PC-9 (cell line): ENCODE measurements at regions of chr5 and their contacts with region 1.

Region 1: GRCh38 chr5:43120720-43121564 is at the start of gene ZNF131:
- DNase-seq: peak; percentile 95 to 100
- H3K4me3 ChIP-seq: peak within 1 kb of the TSS; percentile 73
- H3K27ac ChIP-seq: peak within 1 kb of the TSS; percentile 91
- H3K4me1 ChIP-seq: peaks cover 31% of the 10 kb centered on the region
- H3K27me3 ChIP-seq: no peaks in the 10 kb centered on the region
- CTCF ChIP-seq: no peak
- total RNA-seq, gene ZNF131: 79.5 and 82.4 TPM in 2 replicates

Region 2: DNA sequence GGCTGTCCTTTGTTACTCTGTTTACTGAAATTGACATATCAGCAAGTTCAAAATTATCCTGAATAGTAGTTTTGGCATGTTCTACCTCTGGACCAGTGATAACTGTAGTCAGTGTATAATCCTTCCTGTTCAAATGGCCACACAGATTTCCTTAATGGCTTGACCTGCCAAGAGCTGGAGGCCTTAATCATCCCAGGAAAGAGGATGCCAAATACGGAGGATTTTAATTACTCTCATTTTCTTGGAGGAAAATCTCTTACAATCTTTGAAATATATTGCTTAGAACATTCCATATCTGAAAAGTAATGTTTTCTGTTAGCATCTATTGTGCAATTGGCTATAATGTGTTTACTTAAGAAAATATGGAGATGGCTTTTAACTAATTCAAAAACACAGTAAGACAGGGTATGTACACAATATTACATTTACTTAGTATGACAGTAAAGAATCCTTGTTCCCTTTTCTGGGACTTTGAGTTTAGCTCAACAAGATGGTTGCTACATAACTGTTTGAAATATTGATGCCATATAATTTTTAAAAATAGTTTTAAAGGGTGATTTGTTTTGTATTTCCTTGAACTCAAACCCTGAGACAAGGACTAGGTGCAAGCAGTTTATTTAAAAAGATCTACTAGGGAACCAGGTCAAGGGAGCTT is 240.3 kb before region 1 on chr5:
- CTCF ChIA-PET with region 1: interaction called, 12 read pairs
- POLR2A ChIA-PET with region 1: no interaction called
- intact Hi-C with region 1: no loop called
- DNase-seq: no peak
- H3K4me3 ChIP-seq: no peak overlapping the region
- H3K27ac ChIP-seq: no peak overlapping the region
- H3K4me1 ChIP-seq: no peaks in the 10 kb centered on the region
- H3K27me3 ChIP-seq: no peaks in the 10 kb centered on the region
- CTCF ChIP-seq: no peak

Region 3: GRCh38 chr5:42994246-42995151 is 126.4 kb before region 1 on chr5:
- CTCF ChIA-PET with region 1: no interaction called
- POLR2A ChIA-PET with region 1: no interaction called
- intact Hi-C with region 1: no loop called
- DNase-seq: no peak
- H3K4me3 ChIP-seq: no peak overlapping the region
- H3K27ac ChIP-seq: no peak overlapping the region
- H3K4me1 ChIP-seq: peaks cover 6% of the 10 kb centered on the region
- H3K27me3 ChIP-seq: no peaks in the 10 kb centered on the region
- CTCF ChIP-seq: no peak

Region 4: DNA sequence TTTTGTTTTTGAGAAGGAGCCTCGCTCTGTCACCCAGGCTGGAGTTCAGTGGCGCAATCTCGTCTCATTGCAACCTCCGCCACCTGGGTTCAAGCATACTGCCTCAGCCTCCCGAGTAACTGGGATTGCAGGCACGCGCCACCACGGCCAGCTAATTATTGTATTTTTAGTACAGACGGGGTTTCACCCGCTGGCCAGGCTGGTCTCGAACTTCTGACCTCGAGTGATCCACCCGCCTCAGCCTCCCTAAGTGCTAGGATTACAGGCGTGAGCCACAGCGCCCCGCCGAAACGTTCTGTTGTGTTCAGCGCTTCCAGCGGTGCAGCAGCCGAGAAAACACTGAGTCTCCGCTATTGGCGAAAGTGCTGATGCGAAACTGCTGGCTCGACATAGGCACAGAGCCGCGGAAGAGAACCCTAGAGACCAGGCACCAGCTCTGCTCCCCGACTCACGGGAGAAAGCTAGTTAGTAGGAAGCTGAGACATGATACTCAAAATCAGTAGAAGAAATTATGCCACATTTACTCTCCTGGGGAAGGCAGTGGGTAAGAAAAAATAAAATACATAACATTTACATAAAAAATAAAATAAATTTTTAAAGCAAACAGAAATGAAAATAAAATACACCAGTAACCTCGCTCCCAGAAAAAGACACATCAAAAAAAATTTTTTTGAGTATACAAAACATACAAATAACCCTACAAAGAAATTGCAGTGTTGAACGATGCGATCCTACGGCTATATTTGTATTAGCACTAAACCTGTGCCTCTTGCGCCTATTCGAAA is 112.4 kb before region 1 on chr5:
- CTCF ChIA-PET with region 1: interaction called, 4 read pairs
- POLR2A ChIA-PET with region 1: interaction called, 7 read pairs
- intact Hi-C with region 1: loop called (anchors 5 kb)
- DNase-seq: peak; percentile 94 to 98
- H3K4me3 ChIP-seq: peak overlapping the region; percentile 58
- H3K27ac ChIP-seq: peak overlapping the region; percentile 85
- H3K4me1 ChIP-seq: peaks cover 15% of the 10 kb centered on the region
- H3K27me3 ChIP-seq: no peaks in the 10 kb centered on the region
- CTCF ChIP-seq: peak; percentile 18; the same call in 1 of the 2 replicates

Region 5: GRCh38 chr5:43066799-43067741 is 53.9 kb before region 1 on chr5:
- CTCF ChIA-PET with region 1: interaction called, 3 read pairs
- POLR2A ChIA-PET with region 1: interaction called, 21 read pairs
- intact Hi-C with region 1: loop called (anchors 1 kb)
- DNase-seq: peak; percentile 91 to 93
- H3K4me3 ChIP-seq: peak overlapping the region; percentile 75
- H3K27ac ChIP-seq: peak overlapping the region; percentile 84
- H3K4me1 ChIP-seq: peaks cover 27% of the 10 kb centered on the region
- H3K27me3 ChIP-seq: no peaks in the 10 kb centered on the region
- CTCF ChIP-seq: no peak

Region 6: GRCh38 chr5:43197535-43197934 is 76.6 kb after region 1 on chr5:
- CTCF ChIA-PET with region 1: no interaction called
- POLR2A ChIA-PET with region 1: no interaction called
- intact Hi-C with region 1: no loop called
- DNase-seq: no peak
- H3K4me3 ChIP-seq: no peak overlapping the region
- H3K27ac ChIP-seq: no peak overlapping the region
- H3K4me1 ChIP-seq: peaks cover 15% of the 10 kb centered on the region
- H3K27me3 ChIP-seq: 0 out of 2 replicates have a peak, but pooled peaks cover 1% of the 10 kb centered on the region
- CTCF ChIP-seq: no peak

Region 7: DNA sequence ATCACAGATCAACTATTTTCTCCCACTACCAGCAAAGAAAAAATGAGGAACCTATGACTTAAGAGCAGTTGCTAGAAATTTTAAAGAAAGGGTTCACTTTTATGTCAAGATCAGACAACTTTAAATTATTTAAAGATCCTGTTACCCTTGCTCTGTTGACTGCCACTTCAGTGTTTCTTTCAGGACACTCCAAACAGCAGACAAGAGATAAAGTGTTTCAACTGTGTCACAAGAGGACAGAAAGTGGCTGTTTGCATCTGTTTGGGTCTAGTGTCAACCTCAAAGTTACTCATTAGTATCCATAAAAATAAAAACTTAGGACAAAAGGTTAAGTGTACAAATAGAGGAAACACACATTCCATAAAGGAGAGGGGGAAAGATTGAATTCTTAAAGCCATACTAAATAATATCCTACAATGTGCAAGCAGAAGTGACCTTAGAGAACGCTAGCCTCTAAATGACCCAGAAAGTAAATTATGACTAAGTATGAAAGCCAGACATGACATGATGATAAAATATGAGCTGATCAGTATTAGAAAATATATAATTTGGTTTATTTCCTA is 167.4 kb after region 1 on chr5:
- CTCF ChIA-PET with region 1: no interaction called
- POLR2A ChIA-PET with region 1: interaction called, 17 read pairs
- intact Hi-C with region 1: no loop called
- DNase-seq: no peak
- H3K4me3 ChIP-seq: no peak overlapping the region
- H3K27ac ChIP-seq: peak overlapping the region; percentile 2; the same call in 1 of the 2 replicates
- H3K4me1 ChIP-seq: no peaks in the 10 kb centered on the region
- H3K27me3 ChIP-seq: no peaks in the 10 kb centered on the region
- CTCF ChIP-seq: no peak

Region 8: GRCh38 chr5:43514816-43515677 is 394.1 kb after region 1 on chr5 and contains the start of gene C5orf34:
- CTCF ChIA-PET with region 1: no interaction called
- POLR2A ChIA-PET with region 1: interaction called, 9 read pairs
- intact Hi-C with region 1: loop called (anchors 1 kb)
- DNase-seq: peak; percentile 99 to 100
- H3K4me3 ChIP-seq: peak within 1 kb of the TSS; percentile 73
- H3K27ac ChIP-seq: peak within 1 kb of the TSS; percentile 72
- H3K4me1 ChIP-seq: peaks cover 22% of the 10 kb centered on the region
- H3K27me3 ChIP-seq: no peaks in the 10 kb centered on the region
- CTCF ChIP-seq: 0 out of 2 replicates have a peak, but pooled peaks have one; percentile 15
- total RNA-seq, gene C5orf34: 16.0 and 22.6 TPM in 2 replicates